ENCODE measurements at regions of chr14 and their contacts with region 1.

Region 1: GRCh38 chr14:67695394-67695949 is at the start of gene RDH11:
- DNase-seq: peak; percentile 68 to 94 (median 90)
- H3K4me3 ChIP-seq: peak within 1 kb of the TSS; percentile 62 to 99 (median 90)
- H3K27ac ChIP-seq: peak within 1 kb of the TSS in 58 of 59 donors; percentile 27 to 93 (median 80)
- H3K27me3 ChIP-seq: no peaks in the 10 kb centered on the region
- CTCF ChIP-seq: peak in 29 of 56 donors; percentile 6 to 54 (median 27)
- total RNA-seq, gene RDH11: 51.8 to 100 (median 78.6) TPM

Region 2: DNA sequence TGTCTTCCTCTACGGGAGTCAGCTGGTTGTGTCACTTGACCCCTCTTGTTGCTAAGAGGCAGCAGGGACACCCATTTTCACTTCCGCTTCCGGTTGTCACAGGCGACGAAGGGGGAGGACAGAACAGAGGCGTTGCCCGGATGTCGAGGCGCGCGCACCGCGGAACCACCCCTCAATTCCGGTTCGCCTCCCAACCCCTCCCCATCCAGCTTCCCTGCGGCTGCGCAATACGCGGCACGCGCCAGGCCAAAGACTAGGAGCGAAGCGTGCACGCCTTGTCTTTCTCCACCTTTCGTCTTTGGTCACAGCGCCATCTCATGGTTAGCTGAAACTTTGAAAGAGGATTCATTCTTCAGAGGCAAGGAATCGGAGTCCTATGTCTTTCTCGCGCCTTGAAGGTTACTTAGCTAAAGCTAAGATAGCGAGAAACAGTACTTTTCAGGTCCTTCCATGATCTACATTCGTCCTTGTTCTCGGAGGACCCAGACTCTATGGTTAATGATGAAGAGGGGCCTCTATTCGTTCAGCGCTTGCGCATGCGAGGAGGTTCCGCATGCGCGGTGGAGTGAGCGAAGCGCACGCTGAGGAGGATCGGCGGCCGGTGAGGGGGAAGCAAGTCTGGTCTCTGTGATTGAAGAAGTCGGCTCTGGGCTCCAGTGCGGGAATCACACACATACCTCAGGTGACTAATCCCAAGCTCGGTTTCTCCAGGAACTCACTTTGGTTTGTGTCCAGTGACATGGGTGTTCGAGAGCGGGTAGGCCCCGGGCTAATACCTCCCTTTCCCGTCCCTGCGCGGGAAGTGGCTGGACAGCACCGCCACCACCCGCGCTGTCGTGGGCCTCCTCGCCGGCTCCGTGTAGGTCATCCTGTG is 335.5 kb before region 1 on chr14 and contains the starts of genes ATP6V1D and EIF2S1:
- intact Hi-C with region 1: loop called in 1 of 2 experiments (anchors 5 kb)
- DNase-seq: peak; percentile 98 to 100 (median 99)
- H3K4me3 ChIP-seq: peak within 1 kb of the TSS; percentile 67 to 100 (median 94)
- H3K27ac ChIP-seq: peak within 1 kb of the TSS; percentile 91 to 100 (median 99)
- H3K27me3 ChIP-seq: no peaks in the 10 kb centered on the region
- CTCF ChIP-seq: peak; percentile 91 to 100 (median 99)
- total RNA-seq, gene ATP6V1D: 54.1 to 244 (median 150) TPM
- total RNA-seq, gene EIF2S1: 31.2 to 84.1 (median 59.5) TPM

Region 3: DNA sequence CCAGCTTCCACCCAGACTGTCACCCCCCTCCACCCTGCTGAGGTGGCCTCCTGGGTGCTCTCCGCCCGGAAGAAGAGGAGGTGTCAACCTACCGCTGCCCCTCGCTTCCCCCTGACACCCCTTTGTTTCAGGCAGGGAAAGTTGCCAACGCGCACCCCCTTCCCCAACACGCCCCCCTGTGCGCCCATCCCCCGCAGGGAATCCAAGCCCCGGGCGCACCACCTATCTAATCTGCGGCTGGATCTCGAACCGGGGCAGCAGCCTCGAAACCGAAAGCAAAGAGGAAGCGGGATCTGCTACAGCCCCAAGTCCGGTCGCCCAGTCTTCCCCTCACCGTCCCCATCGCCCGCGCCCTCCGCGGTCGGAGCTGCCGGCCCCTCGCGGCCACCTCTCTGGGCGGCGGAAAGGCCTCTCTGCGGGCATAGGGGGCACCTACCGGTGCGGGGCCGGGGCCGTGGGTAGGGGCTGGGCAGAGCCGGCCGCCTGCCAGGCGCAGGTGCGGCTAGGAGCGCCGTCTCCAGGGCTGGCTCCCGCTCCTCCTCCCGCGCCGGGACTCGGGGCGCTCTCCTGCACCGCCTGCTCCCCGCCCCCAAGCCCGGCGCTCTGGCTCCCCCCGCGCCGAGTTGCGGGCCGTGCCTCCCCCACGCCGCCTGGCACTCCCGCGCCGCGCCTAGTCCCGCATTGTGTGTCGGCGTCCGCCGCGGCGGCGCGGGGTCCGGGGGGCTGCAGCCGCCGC is 180.7 kb before region 1 on chr14:
- intact Hi-C with region 1: loop called in 1 of 2 experiments (anchors 5 kb)
- DNase-seq: peak in 6 of 10 donors; percentile 37 to 68 (median 56)
- H3K4me3 ChIP-seq: peak overlapping the region; percentile 56 to 98 (median 90)
- H3K27ac ChIP-seq: peak overlapping the region in 56 of 59 donors; percentile 12 to 93 (median 79)
- H3K27me3 ChIP-seq: no peaks in the 10 kb centered on the region
- CTCF ChIP-seq: peak in 3 of 56 donors; percentile 9 to 42 (median 24)

Region 4: DNA sequence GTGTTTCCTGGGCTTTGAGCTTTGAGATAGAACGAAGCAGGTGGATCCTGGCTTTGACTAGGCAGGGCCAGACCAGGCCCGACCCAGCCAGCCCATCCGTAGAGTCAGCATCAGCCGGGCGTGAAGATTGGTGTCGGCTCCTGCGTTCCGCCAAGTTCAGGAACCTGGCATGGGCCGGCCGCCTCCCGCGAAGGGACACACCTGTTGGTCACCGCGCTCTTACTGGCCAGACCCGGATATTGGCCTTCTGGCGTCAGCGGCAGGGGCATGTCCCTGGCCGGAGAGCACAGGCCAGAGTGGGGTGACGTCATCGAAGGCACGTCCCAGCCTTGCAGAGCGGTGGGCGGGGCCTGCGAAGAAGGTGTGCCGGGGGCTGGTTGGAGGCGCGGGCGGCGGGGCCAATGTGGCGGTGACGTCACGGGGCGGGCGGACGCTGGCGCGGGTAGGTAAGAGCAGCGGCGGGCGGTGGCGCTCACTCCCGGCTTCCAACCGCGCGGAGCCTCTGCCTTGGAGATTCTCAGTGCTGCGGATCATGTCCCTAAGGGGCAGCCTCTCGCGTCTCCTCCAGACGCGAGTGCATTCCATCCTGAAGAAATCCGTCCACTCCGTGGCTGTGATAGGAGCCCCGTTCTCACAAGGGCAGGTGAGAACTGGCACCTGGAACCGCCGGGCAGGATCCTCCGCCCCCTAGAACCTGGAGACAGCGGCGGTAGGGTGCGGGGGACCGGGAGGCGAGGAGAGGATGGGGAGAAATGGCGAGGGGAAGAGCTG is 75.8 kb before region 1 on chr14 and contains the start of gene ARG2:
- intact Hi-C with region 1: loop called (anchors 5 kb)
- DNase-seq: peak; percentile 89 to 100 (median 94)
- H3K4me3 ChIP-seq: peak within 1 kb of the TSS; percentile 56 to 95 (median 80)
- H3K27ac ChIP-seq: peak within 1 kb of the TSS in 57 of 59 donors; percentile 27 to 92 (median 76)
- H3K27me3 ChIP-seq: no peaks in the 10 kb centered on the region
- CTCF ChIP-seq: peak in 24 of 56 donors; percentile 7 to 57 (median 30)
- total RNA-seq, gene ARG2: 5.2 to 42.6 (median 14.9) TPM

Region 5: DNA sequence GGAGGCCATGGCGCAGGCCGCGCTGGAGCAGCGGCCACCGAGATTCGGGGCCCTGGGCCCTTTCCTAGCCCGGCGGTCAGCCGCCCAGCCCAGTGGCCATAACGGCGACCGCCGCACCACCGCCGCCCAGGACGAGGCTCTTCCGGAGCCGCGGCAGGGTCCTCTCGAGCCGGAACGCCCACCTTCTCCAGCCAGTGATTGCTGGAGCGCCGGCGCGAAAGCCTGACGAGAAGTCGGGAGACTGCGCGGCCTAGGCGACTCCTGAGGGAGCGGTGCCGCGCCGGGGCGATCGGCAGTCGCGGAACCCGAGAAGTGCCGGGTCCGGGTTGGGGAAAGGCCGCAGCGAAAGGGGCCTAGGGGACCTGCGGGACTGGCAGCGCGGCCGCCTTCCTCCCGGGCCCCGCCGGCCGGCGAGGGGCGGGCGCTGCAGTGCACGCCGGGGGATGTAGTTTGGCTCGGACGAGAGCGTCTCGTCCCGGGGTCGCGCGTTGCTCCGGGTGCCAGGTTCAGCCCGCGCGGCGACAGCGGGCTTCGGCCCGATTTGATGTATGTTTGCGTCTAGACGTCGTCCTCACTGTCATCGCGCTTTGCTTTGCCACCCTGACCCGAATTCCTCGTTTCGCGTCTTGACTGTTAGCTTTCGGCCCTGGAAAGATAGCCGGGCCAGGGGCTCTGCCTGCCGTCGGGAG is 20.8 kb before region 1 on chr14 and contains the start of gene VTI1B:
- intact Hi-C with region 1: loop called in 1 of 2 experiments (anchors 1 kb)
- DNase-seq: peak; percentile 57 to 87 (median 76)
- H3K4me3 ChIP-seq: peak within 1 kb of the TSS; percentile 78 to 100 (median 94)
- H3K27ac ChIP-seq: peak within 1 kb of the TSS; percentile 93 to 100 (median 99)
- H3K27me3 ChIP-seq: no peaks in the 10 kb centered on the region
- CTCF ChIP-seq: peak in 30 of 56 donors; percentile 1 to 51 (median 19)
- total RNA-seq, gene VTI1B: 101 to 177 (median 140) TPM

Region 6: DNA sequence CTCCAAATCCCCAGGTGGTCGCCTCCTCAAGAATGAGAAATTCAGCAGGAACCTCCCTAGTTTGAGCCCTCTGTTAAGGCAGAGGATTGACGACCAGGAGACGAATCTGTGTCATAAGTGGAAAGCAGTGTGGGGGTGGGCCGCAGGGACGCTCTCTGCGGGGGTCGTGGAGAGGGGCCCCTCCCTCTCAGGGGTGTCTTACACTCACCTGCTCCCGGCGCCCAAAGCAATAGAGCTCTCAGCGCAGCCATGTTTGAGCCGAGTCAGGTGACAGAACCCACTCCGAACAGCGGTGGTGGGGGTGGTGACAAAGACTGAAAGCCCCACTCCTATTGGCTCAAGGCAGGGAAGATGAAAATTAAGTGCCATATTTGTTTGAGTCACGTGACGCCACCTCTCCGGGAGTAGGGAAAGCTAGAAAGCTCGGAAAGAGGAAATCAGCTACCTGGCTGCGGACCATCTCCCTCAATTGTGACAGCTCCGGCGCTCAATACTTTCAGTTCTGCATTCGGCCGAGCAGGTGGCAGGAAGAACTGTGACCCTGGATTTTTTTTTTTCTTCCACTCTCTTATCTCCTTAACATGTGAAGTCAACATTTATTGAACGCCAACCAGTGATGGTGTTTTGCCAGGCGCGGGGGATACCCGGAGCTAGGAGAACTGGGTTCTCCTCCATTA is 121.0 kb after region 1 on chr14 and contains the start of gene ZFYVE26:
- intact Hi-C with region 1: loop called (anchors 5 to 10 kb)
- DNase-seq: peak; percentile 85 to 98 (median 95)
- H3K4me3 ChIP-seq: peak within 1 kb of the TSS; percentile 61 to 99 (median 84)
- H3K27ac ChIP-seq: peak within 1 kb of the TSS; percentile 38 to 95 (median 86)
- H3K27me3 ChIP-seq: no peaks in the 10 kb centered on the region
- CTCF ChIP-seq: peak in 16 of 56 donors; percentile 3 to 47 (median 18)
- total RNA-seq, gene ZFYVE26: 17.7 to 41.8 (median 28.0) TPM

Region 7: DNA sequence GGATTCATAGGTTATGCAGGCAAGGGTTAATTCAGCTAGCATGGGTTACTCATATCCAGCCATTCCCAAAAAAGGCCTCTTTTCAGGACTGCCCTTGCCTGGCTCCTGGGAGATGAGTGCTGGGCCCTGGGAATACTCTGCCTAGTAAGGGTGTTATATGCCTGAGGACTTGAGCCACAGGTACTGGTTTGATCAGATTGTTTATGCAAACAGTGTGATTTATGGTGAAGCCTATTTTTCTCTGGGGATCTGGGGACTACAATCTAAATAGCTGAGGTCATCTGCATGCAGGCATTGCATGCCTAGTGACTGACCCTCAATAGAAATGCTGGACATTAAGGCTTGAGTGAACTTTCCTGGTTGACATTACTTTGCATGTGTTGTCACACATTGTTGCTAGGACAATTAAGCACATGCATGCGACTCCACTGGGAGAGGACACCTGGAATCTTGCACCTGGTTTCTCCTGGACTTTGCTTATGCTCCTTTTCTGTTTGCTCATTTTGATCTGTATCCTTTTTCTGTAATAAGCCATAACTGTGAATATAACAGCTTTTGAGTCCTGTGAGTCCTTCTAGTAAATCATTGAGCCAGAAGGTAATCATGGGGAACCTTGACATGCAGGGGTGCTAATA is 197.1 kb after region 1 on chr14:
- intact Hi-C with region 1: no loop called
- DNase-seq: no peak
- H3K4me3 ChIP-seq: no peak overlapping the region
- H3K27ac ChIP-seq: no peak overlapping the region
- H3K27me3 ChIP-seq: no peaks in the 10 kb centered on the region
- CTCF ChIP-seq: no peak